ENCODE measurements at regions of chr14 and their contacts with region 1.

Region 1: GRCh38 chr14:47917345-47917954 is 242.0 kb upstream of the MDGA2 start:
- DNase-seq: peak in 1 of 2 experiments; percentile 16
- H3K4me3 ChIP-seq: no peak overlapping the region
- H3K27ac ChIP-seq: no peak overlapping the region
- H3K4me1 ChIP-seq: no peaks in the 10 kb centered on the region
- H3K27me3 ChIP-seq: no peaks in the 10 kb centered on the region
- CTCF ChIP-seq: peak; percentile 76

Region 2: DNA sequence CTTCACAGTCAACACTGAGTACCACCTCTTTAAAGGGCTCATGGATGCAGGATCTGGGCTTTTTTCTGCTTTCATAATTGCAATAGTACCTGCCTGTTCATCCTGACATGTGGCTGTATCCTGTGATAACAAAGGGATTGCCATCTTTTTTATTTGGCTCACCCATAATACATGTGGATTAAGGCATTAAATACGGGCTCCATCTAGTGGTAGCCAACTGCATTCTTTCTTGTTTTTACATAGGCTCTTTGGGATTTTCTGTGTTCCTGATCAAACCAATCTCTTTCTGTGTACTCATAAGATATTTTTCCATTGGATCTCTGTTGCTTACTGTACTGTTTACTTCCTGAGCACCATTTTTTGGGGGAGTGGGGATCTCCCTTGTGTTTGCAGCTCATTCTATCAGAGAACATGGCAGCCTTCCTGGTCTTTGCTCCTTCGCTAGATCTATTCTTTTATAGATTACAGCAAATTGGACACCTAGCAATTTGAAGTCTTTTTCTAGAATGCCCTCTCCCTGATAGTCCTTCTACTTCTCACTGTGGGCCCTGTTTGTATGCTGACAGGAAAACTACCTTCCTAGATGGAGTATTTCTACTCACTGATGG is 481.3 kb after region 1 on chr14:
- CTCF ChIA-PET with region 1: no interaction called
- POLR2A ChIA-PET with region 1: no interaction called
- intact Hi-C with region 1: loop called (anchors 1 kb)
- DNase-seq: peak in 1 of 2 experiments; percentile 4
- H3K4me3 ChIP-seq: no peak overlapping the region
- H3K27ac ChIP-seq: no peak overlapping the region
- H3K4me1 ChIP-seq: no peaks in the 10 kb centered on the region
- H3K27me3 ChIP-seq: no peaks in the 10 kb centered on the region
- CTCF ChIP-seq: peak; percentile 78

Region 3: GRCh38 chr14:49173765-49174373 is 1256.4 kb after region 1 on chr14:
- CTCF ChIA-PET with region 1: no interaction called
- POLR2A ChIA-PET with region 1: no interaction called
- intact Hi-C with region 1: loop called (anchors 1 kb)
- DNase-seq: peak; percentile 43 to 53
- H3K4me3 ChIP-seq: no peak overlapping the region
- H3K27ac ChIP-seq: no peak overlapping the region
- H3K4me1 ChIP-seq: no peaks in the 10 kb centered on the region
- H3K27me3 ChIP-seq: no peaks in the 10 kb centered on the region
- CTCF ChIP-seq: peak; percentile 78

Measured in PC-9 (cell line).